Activated T-helper 2 cell treated with anti-CD3 and anti-CD28 coated beads, Interferon-gamma antibody, Interleukin-2, Interleukin-4, amounts not matched to agents 10 μg/mL and 5 μg/mL and 100 μg/mL, durations not matched to agents 14 hours and 24 hours and 36 hours (primary cell): ENCODE measurements at regions of chr1 and their contacts with region 1.

Region 1: GRCh38 chr1:160837558-160838205 is 25.0 kb downstream of the CD244 start:
- DNase-seq: peak; percentile 82
- H3K4me3 Mint-ChIP-seq: peak overlapping the region; percentile 45
- H3K27ac Mint-ChIP-seq: peak overlapping the region; percentile 98
- H3K4me1 Mint-ChIP-seq: peaks cover 48% of the 10 kb centered on the region
- H3K27me3 Mint-ChIP-seq: no peaks in the 10 kb centered on the region

Region 2: GRCh38 chr1:160795951-160796383 is 41.7 kb before region 1 on chr1 and contains the start of gene LY9:
- intact Hi-C with region 1: loop called (anchors 2 kb)
- DNase-seq: peak; percentile 79
- H3K4me3 Mint-ChIP-seq: peak within 1 kb of the TSS; percentile 75
- H3K27ac Mint-ChIP-seq: peak within 1 kb of the TSS; percentile 80
- H3K4me1 Mint-ChIP-seq: peaks cover 62% of the 10 kb centered on the region
- H3K27me3 Mint-ChIP-seq: no peaks in the 10 kb centered on the region
- total RNA-seq, gene LY9: 0.28 and 0.34 TPM in 2 replicates

Region 3: DNA sequence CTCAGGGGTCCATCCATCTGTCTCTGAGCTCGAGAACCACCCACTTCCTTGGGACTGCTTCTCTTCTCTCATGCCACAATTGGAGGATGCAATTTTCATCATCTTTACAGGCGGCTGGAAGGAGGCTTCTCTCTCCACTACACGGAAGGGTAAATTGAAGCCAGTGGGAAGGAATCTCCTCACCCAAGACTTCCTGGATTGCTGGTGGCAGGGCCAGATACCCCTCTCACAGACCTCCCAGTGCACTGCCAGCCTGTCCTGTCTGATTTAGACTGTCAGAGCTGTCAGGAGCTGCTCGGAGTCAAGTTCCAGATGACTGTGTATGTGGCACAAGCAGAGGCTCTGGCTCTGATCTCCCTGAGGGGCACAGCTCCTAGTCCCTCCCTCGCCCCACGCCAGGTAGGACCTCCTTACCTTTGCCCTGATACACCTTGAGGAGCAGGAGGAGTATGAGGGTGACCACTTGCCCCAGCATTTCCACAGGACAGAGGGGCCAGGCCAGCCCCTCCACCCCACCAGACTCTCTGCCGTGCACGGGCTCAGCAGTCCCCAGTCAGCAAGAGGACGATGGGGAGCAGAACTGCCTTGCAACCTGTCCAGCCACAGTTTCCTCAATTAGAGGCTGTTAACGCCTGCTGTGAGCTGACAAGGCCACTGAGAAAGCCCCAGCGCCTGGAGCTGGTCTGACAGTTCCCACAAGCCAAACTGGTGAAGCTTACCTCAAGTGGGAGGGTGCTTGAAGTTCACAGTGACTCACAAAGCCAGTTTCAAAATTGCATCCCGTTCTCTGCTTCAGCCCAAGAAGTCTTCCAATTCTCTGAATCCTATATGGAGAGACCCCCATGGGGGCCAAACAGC is 24.8 kb after region 1 on chr1 and contains the start of gene CD244:
- intact Hi-C with region 1: loop called (anchors 2 kb)
- DNase-seq: peak; percentile 28
- H3K4me3 Mint-ChIP-seq: peak within 1 kb of the TSS; percentile 23
- H3K27ac Mint-ChIP-seq: no peak within 1 kb of the TSS
- H3K4me1 Mint-ChIP-seq: peaks cover 28% of the 10 kb centered on the region
- H3K27me3 Mint-ChIP-seq: no peaks in the 10 kb centered on the region
- total RNA-seq, gene CD244: 0.21 and 0.32 TPM in 2 replicates

Region 4: GRCh38 chr1:160877221-160877620 is 39.5 kb after region 1 on chr1:
- intact Hi-C with region 1: loop called (anchors 1 kb)
- DNase-seq: no peak
- H3K4me3 Mint-ChIP-seq: no peak overlapping the region
- H3K27ac Mint-ChIP-seq: no peak overlapping the region
- H3K4me1 Mint-ChIP-seq: peaks cover 10% of the 10 kb centered on the region
- H3K27me3 Mint-ChIP-seq: peaks cover 5% of the 10 kb centered on the region

Region 5: GRCh38 chr1:160884579-160884978 is 46.9 kb after region 1 on chr1:
- intact Hi-C with region 1: loop called (anchors 2 kb)
- DNase-seq: peak; percentile 22
- H3K4me3 Mint-ChIP-seq: no peak overlapping the region
- H3K27ac Mint-ChIP-seq: no peak overlapping the region
- H3K4me1 Mint-ChIP-seq: peaks cover 4% of the 10 kb centered on the region
- H3K27me3 Mint-ChIP-seq: peaks cover 13% of the 10 kb centered on the region

Region 6: GRCh38 chr1:160951443-160952128 is 113.9 kb after region 1 on chr1:
- intact Hi-C with region 1: loop called (anchors 1 kb)
- DNase-seq: peak; percentile 59
- H3K4me3 Mint-ChIP-seq: no peak overlapping the region
- H3K27ac Mint-ChIP-seq: no peak overlapping the region
- H3K4me1 Mint-ChIP-seq: peaks cover 7% of the 10 kb centered on the region
- H3K27me3 Mint-ChIP-seq: no peaks in the 10 kb centered on the region